Activated CD8-positive, alpha-beta memory T cell treated with anti-CD3 and anti-CD28 coated beads, Interleukin-2, amount 10 ng/mL, durations not matched to agents 7 days and 5 days (primary cell): ENCODE measurements at regions of chr11 and their contacts with region 1.

Region 1: GRCh38 chr11:1572197-1573076 is at the start of gene DUSP8:
- DNase-seq: peak; percentile 91
- ATAC-seq: peak; percentile 82
- H3K4me3 Mint-ChIP-seq: no peak within 1 kb of the TSS
- H3K27ac Mint-ChIP-seq: no peak within 1 kb of the TSS
- H3K4me1 Mint-ChIP-seq: peaks cover 8% of the 10 kb centered on the region
- H3K27me3 Mint-ChIP-seq: peaks cover 27% of the 10 kb centered on the region
- total RNA-seq, gene DUSP8: 0.50 to 1.1 TPM

Region 2: GRCh38 chr11:848380-848931 is 724.0 kb before region 1 on chr11:
- CTCF ChIA-PET with region 1: interaction called, 11 read pairs
- DNase-seq: peak; percentile 74
- ATAC-seq: peak; percentile 81
- H3K4me3 Mint-ChIP-seq: no peak overlapping the region
- H3K27ac Mint-ChIP-seq: no peak overlapping the region
- H3K4me1 Mint-ChIP-seq: peaks cover 13% of the 10 kb centered on the region
- H3K27me3 Mint-ChIP-seq: peaks cover 13% of the 10 kb centered on the region

Region 3: DNA sequence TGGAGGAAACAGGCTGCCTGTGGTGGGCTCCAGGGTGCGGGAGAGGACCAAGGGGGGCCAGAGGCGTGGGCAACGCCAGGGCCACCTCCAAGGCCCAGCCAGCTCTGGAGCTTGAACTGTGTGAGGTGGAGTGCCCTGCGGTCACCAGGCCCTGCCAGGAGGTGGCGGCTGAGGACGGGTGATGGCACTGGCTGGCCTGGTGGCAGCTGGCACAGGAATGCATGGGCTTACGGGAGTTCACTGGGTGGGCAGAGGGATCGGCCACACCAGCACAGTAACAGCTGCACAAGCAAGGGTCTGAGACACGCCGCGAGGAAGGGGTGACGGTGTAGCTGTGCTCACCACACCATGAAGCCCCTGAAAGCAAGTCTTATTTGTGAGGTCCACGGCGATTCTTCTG is 278.8 kb before region 1 on chr11:
- CTCF ChIA-PET with region 1: interaction called, 10 read pairs
- DNase-seq: no peak
- ATAC-seq: peak; percentile 39
- H3K4me3 Mint-ChIP-seq: no peak overlapping the region
- H3K27ac Mint-ChIP-seq: no peak overlapping the region
- H3K4me1 Mint-ChIP-seq: no peaks in the 10 kb centered on the region
- H3K27me3 Mint-ChIP-seq: no peaks in the 10 kb centered on the region

Region 4: DNA sequence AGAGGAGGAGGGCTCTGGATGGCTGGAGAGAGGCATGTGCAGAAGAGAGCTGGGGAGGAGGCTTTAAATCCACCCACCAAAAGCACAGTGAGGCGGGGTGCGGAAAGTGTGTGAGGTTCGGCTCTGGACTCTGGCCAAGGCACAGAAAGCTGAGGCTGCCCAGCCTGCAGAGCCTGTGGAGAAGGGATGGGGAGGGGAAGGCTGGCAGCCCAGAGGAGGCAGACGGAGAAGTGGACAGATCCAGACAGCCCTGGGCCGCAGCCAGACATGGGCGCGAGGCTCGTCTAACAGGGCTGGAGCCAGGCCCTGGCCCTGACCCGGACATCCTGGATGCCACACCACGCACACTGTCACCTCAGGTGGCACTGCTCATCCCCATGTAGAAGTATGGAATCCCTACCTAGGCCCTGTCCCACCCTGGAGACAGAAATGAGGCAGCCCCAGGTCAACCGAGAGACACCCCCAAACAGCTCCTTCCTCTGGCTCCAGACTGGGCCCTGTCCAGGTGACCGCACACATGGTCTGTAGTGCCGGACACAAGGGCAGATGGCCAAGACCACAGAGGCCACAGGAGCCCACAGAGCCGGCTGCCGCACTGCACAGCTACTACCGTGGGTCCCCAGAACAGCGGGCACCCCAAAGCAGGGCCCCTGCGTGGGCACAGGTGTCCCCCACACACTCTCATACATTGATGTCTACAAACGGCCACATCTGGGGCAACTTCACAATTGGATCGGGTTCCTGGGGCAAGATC is 69.3 kb before region 1 on chr11:
- CTCF ChIA-PET with region 1: no interaction called
- DNase-seq: no peak
- ATAC-seq: no peak
- H3K4me3 Mint-ChIP-seq: no peak overlapping the region
- H3K27ac Mint-ChIP-seq: no peak overlapping the region
- H3K4me1 Mint-ChIP-seq: peaks cover 4% of the 10 kb centered on the region
- H3K27me3 Mint-ChIP-seq: no peaks in the 10 kb centered on the region

Region 5: DNA sequence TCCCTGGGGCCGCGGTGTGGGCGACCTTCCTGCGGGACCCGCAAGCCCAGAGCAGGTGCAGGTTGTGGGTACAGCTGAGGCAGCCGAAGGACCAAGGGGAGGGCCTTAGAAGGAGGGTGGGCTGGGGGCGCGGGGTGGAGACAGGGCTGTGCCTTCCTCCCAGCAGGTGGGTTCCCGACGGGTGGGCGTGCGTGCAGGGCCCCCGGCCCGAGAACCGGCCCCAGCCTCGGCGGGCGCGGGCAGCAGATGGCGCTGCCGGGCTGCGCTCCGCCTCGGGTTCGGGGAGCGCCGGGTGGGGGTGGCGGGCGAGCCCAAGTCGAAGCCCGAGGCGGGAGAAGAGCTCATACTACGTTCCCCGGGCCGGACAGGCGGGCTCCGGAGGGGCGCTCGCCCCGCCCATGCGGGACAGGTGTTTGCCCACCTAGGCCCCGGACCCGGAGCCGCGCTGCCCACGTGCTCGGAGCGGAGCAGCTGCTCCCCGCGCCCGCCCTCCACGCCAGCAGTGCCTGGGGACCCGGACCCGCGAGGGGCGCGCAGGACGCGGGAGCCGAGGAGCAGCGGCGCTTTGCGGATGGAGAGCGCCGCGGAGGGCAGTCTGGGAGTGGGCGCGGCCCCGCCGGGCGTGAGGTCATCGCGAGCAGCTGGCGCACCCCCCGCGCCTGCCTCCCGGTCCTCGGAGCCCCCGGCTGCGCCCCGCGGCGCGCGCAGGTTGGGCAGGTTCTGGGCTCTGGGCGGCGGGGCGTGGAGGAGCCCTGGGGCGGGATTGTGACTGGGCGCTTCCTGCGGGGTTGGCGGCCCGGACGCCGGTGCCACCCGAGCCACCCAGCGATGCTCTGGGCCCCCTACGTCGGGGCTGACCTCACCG is 25.7 kb before region 1 on chr11:
- CTCF ChIA-PET with region 1: interaction called, 64 read pairs
- DNase-seq: no peak
- ATAC-seq: peak; percentile 70
- H3K4me3 Mint-ChIP-seq: no peak overlapping the region
- H3K27ac Mint-ChIP-seq: no peak overlapping the region
- H3K4me1 Mint-ChIP-seq: no peaks in the 10 kb centered on the region
- H3K27me3 Mint-ChIP-seq: peaks cover 35% of the 10 kb centered on the region

Region 6: GRCh38 chr11:1592628-1593027 is 20.2 kb after region 1 on chr11:
- CTCF ChIA-PET with region 1: interaction called, 47 read pairs
- DNase-seq: no peak
- ATAC-seq: no peak
- H3K4me3 Mint-ChIP-seq: no peak overlapping the region
- H3K27ac Mint-ChIP-seq: no peak overlapping the region
- H3K4me1 Mint-ChIP-seq: peaks cover 13% of the 10 kb centered on the region
- H3K27me3 Mint-ChIP-seq: peaks cover 54% of the 10 kb centered on the region